A673 (cell line): ENCODE measurements at regions of chr6 and their contacts with region 1.

Region 1: GRCh38 chr6:30717042-30717844 is at the start of gene MDC1:
- DNase-seq: peak; percentile 100
- H3K4me3 ChIP-seq: peak within 1 kb of the TSS; percentile 50
- H3K27ac ChIP-seq: peak within 1 kb of the TSS; percentile 94
- H3K4me1 ChIP-seq: peaks cover 19% of the 10 kb centered on the region
- H3K27me3 ChIP-seq: no peaks in the 10 kb centered on the region
- CTCF ChIP-seq: peak; percentile 24; the same call in 1 of the 2 replicates
- total RNA-seq, gene MDC1: 52.9 and 53.4 TPM in 2 replicates

Region 2: DNA sequence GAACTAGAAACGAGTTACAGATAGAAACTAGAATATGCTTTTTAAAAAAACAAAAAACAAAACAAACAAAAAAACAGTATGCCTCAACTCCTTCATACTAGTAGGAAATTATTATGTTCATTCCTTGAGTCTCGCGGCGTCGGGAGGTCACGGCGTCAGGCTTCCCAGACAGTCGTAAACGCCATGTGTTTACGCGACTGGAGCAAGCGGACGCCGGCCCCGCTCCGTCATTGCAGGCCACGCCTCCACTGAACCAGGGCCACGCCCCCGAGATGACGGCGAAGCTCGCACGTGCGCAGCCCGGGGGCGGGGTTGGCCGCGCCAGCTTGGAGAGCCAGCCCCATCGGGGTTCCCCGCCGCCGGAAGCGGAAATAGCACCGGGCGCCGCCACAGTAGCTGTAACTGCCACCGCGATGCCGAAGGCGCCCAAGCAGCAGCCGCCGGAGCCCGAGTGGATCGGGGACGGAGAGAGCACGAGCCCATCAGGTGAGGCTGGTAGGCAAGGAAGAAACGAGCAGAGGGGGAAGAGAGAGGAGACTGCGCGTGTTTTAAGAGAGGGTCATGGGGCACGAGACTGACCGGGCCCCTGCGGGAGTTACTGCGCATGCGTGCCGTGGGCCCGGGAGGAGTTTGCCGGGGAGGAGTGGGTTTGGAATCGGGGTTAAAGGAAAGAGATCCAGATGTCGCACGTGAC is 146.0 kb before region 1 on chr6 and contains the start of gene ABCF1:
- CTCF ChIA-PET with region 1: no interaction called
- POLR2A ChIA-PET with region 1: interaction called, 11 read pairs
- intact Hi-C with region 1: no loop called
- DNase-seq: peak; percentile 98
- H3K4me3 ChIP-seq: peak within 1 kb of the TSS; percentile 65
- H3K27ac ChIP-seq: peak within 1 kb of the TSS; percentile 88
- H3K4me1 ChIP-seq: peaks cover 32% of the 10 kb centered on the region
- H3K27me3 ChIP-seq: no peaks in the 10 kb centered on the region
- CTCF ChIP-seq: no peak
- total RNA-seq, gene ABCF1: 109 and 119 TPM in 2 replicates

Region 3: GRCh38 chr6:30583921-30584320 is 133.3 kb before region 1 on chr6:
- CTCF ChIA-PET with region 1: no interaction called
- POLR2A ChIA-PET with region 1: interaction called, 17 read pairs
- intact Hi-C with region 1: no loop called
- DNase-seq: no peak
- H3K4me3 ChIP-seq: no peak overlapping the region
- H3K27ac ChIP-seq: no peak overlapping the region
- H3K4me1 ChIP-seq: no peaks in the 10 kb centered on the region
- H3K27me3 ChIP-seq: no peaks in the 10 kb centered on the region
- CTCF ChIP-seq: no peak

Region 4: DNA sequence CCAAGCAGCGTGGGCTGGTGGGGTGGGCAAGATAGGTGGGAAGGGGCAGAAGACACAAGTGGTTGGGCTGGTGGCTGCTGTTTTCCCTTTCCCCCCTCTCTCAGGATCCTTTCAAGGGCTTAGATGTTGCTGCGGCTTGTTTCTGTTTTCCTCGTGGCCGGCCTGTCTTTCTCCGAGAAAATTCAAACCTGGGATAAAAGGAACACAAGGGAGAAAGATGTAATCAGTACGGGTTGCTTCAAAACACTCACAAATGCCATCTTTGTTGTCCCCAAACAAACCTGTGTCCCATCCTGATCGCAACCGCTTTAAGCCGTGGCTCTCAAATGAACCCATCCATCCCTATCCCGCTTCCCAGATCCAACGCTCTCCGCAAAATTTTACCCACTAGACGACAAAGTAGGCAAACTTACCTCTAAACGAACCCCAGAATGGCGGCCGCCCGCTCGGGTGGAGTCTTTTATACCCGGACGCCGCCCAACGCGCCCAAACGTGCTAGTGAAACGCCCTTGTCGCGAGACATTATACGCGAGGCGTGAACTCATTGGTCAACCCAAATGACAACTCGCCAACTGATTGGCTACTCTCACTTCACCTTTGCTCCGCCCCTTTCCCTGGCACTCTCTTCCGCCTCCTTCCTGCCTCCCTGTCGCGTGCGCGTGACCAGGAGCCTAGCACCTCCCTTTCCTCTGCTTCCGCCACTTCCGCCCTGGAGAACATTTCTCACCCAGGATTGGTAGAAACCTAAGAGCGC is 100.3 kb before region 1 on chr6 and contains the start of gene PPP1R10:
- CTCF ChIA-PET with region 1: no interaction called
- POLR2A ChIA-PET with region 1: interaction called, 5 read pairs
- intact Hi-C with region 1: loop called (anchors 1 kb)
- DNase-seq: peak; percentile 100
- H3K4me3 ChIP-seq: peak within 1 kb of the TSS; percentile 81
- H3K27ac ChIP-seq: peak within 1 kb of the TSS; percentile 99
- H3K4me1 ChIP-seq: peaks cover 31% of the 10 kb centered on the region
- H3K27me3 ChIP-seq: no peaks in the 10 kb centered on the region
- CTCF ChIP-seq: no peak
- total RNA-seq, gene PPP1R10: 121 and 129 TPM in 2 replicates

Region 5: GRCh38 chr6:30678964-30679726 is 38.1 kb before region 1 on chr6:
- CTCF ChIA-PET with region 1: interaction called, 11 read pairs
- POLR2A ChIA-PET with region 1: interaction called, 4 read pairs
- intact Hi-C with region 1: loop called (anchors 1 kb)
- DNase-seq: peak; percentile 89
- H3K4me3 ChIP-seq: no peak overlapping the region
- H3K27ac ChIP-seq: peak overlapping the region; percentile 43
- H3K4me1 ChIP-seq: peaks cover 23% of the 10 kb centered on the region
- H3K27me3 ChIP-seq: no peaks in the 10 kb centered on the region
- CTCF ChIP-seq: peak; percentile 97

Region 6: GRCh38 chr6:30690403-30691207 is 26.6 kb before region 1 on chr6 and contains the start of gene NRM:
- CTCF ChIA-PET with region 1: interaction called, 3 read pairs
- POLR2A ChIA-PET with region 1: interaction called, 3 read pairs
- intact Hi-C with region 1: loop called (anchors 2 kb)
- DNase-seq: peak; percentile 92
- H3K4me3 ChIP-seq: peak within 1 kb of the TSS; percentile 75
- H3K27ac ChIP-seq: peak within 1 kb of the TSS; percentile 70
- H3K4me1 ChIP-seq: peaks cover 29% of the 10 kb centered on the region
- H3K27me3 ChIP-seq: no peaks in the 10 kb centered on the region
- CTCF ChIP-seq: no peak
- total RNA-seq, gene NRM: 49.8 and 54.4 TPM in 2 replicates

Region 7: DNA sequence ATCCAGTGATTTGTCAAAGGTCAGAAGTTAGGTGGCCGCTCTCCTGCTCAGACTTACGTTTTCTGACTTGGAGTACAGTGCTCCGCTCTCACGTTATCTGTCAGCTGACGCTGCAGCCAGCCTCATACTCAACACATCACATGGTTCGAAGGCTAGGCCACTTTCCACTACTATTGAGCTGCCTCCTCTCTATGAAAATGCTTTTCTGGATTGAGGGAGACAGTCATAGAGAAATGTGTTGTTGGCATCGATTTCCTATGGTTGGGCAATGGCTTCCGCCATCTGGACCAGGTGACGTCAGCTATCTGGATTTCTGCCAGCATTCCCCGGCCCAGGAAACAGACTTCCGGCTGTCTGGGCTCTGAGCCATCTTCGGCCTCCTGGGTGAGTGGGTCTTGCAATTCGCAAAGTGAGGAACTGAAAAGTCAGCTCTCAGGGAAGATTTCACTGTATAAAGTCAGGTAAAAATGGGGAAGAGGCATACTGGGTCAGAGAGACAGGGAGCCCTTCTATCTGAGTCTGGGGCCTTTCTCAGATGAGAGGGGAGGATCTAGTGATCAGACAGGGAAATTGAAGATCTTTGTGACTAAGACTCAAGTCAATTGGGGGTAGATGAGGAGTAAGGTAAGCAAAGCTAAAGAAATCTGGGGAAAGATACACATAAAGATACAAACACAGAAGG is 64.6 kb after region 1 on chr6:
- CTCF ChIA-PET with region 1: no interaction called
- POLR2A ChIA-PET with region 1: no interaction called
- intact Hi-C with region 1: no loop called
- DNase-seq: peak; percentile 98
- H3K4me3 ChIP-seq: peak overlapping the region; percentile 24
- H3K27ac ChIP-seq: peak overlapping the region; percentile 89
- H3K4me1 ChIP-seq: peaks cover 44% of the 10 kb centered on the region
- H3K27me3 ChIP-seq: no peaks in the 10 kb centered on the region
- CTCF ChIP-seq: no peak

Region 8: GRCh38 chr6:30800871-30801270 is 83.6 kb after region 1 on chr6:
- CTCF ChIA-PET with region 1: no interaction called
- POLR2A ChIA-PET with region 1: no interaction called
- intact Hi-C with region 1: no loop called
- DNase-seq: no peak
- H3K4me3 ChIP-seq: no peak overlapping the region
- H3K27ac ChIP-seq: no peak overlapping the region
- H3K4me1 ChIP-seq: no peaks in the 10 kb centered on the region
- H3K27me3 ChIP-seq: no peaks in the 10 kb centered on the region
- CTCF ChIP-seq: no peak

Region 9: DNA sequence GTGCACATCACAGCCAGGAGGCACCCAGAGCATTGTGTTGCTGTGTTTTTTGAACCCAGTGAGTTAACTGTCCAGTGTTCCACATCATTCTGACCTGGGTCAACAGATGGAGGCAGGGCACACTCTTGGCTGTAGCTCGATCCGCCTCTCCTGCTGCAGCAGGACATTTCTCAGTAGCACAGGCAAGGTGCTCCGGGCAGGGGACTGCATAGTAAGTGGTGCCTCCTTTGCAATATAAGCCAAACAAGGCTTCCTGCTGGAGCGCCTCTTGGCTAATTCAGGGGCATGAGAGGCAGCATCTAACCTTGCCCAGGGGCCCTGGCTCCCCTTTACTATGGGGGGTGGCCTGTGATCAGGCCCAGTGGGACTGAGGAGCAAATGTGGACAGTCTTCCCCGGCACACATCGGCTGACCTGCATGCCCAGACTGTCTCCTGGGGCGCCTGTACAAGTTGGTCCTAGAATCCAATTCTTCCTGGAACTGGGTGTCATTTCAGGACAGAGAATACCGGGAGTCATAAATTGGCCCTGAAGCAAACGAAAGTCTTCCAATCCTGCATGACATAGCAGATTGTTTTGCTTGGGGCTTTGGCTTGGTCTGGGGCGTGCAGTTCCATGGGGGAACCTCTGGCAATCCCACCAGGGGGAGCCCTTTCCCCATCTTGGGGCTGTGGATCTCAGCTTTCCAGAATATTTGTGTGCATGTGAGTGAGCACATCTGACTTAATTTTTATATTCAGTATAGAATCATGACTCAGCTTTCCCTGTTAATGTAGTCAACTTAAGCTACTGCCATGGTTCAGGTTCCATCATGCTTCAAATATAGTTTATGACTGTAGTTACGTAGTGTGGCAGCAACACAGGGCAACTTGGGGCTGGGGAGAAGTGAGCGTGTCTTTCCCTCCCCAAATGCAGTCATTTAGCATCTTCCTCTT is 111.1 kb after region 1 on chr6:
- CTCF ChIA-PET with region 1: no interaction called
- POLR2A ChIA-PET with region 1: no interaction called
- intact Hi-C with region 1: no loop called
- DNase-seq: peak; percentile 90
- H3K4me3 ChIP-seq: no peak overlapping the region
- H3K27ac ChIP-seq: peak overlapping the region; percentile 40
- H3K4me1 ChIP-seq: peaks cover 5% of the 10 kb centered on the region
- H3K27me3 ChIP-seq: no peaks in the 10 kb centered on the region
- CTCF ChIP-seq: peak; percentile 96